Activated CD4-positive, alpha-beta T cell treated with anti-CD3 and anti-CD28 coated beads, Interleukin-2, amount 10 ng/mL, durations not matched to agents 24 days and 14 days (primary cell): ENCODE measurements at regions of chr2 and their contacts with region 1.

Region 1: DNA sequence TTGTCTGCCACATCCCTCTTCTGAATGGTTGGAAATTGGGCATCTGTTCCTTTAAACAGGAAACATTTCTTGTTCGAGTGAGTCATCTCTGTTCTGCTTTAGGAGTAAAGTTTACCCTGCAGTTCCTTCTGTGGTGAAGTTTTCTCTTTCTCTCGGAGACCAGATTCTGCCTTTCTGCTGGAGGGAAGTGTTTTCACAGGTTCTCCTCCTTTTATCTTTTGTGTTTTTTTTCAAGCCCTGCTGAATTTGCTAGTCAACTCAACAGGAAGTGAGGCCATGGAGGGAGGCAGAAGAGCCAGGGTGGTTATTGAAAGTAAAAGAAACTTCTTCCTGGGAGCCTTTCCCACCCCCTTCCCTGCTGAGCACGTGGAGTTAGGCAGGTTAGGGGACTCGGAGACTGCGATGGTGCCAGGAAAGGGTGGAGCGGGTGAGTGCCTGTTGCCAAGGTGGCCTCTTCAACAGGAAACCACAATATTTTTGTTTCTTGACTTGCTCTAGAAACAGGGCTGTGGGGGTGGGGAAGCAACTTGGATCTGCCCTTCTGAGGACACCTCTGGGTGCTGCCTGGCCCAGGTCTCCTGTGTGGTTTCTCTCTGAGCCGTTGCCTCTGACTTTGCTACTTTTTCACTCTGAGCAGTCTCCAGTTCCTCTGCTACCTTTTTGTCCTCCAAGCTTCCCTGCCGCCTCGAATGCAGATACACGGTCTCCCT is 2.2 kb upstream of the CASP8 start:
- DNase-seq: peak; percentile 98
- H3K4me3 Mint-ChIP-seq: peak overlapping the region; percentile 100
- H3K27ac Mint-ChIP-seq: peak overlapping the region; percentile 98
- H3K4me1 Mint-ChIP-seq: peaks cover 71% of the 10 kb centered on the region
- H3K27me3 Mint-ChIP-seq: no peaks in the 10 kb centered on the region

Region 2: DNA sequence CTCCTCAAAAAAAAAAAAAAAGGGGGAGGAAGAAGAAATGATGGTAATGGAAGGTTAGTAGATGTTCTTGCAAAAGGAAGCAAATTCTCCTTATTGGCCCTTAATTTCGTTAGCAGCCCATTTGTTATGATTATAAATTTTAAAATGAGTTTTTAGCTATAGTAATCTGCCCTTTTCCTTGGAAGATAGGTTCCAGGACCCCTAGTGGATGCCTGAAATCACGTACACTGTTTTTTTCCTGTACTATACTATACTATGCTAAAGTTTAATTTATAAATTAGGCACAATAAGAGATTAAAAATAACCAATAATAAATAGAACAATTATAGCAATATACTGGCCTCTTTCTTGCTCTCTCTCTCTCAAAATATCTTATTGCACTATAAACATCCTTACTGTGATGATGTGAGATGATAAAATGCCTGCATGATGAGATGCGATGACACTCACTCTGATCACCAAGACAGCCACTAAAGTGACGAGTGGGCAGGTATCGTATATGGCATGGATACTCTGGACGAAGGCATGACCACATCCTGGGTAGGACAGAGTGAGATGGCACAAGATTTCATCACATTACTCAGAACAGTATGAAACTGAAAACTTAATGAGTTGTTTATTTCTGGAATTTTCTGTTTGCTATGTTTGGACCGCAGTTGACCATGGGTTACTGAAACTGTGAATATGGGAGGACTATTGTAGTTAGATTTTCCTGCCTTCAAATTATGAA is 835.4 kb before region 1 on chr2:
- intact Hi-C with region 1: no loop called
- DNase-seq: no peak
- H3K4me3 Mint-ChIP-seq: no peak overlapping the region
- H3K27ac Mint-ChIP-seq: no peak overlapping the region
- H3K4me1 Mint-ChIP-seq: peaks cover 9% of the 10 kb centered on the region
- H3K27me3 Mint-ChIP-seq: no peaks in the 10 kb centered on the region

Region 3: DNA sequence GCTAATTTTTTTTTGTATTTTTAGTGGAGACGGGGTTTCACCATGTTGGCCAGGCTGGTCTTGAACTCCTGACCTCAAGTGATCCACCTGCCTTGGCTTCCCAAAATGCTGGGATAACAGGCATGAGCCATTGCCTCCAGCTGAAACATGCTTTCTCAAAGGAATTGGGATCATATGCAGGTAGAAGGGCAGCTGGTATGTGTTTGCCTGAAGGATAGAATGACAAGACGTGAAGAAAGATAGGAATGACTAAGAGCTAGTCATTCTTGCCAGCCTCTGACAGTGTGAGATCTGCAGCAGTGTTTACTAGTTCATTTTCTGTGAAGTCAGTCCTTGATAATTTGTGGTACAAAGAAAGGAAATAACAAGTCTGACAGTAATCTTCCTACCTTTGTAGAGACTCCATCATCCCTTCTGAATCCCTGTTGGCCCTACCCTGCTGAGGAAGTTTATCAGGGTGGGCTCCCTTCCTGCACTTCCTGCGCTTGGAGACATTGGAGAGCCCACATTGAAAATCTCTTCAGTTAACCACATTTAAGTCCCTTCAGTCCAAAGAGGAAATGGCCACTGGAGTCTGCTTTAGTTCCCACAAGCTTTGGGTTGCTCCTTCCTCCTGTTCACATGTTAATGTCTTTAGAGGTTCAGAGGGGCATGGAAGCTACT is 127.5 kb before region 1 on chr2:
- intact Hi-C with region 1: loop called (anchors 1 kb)
- DNase-seq: peak; percentile 80
- H3K4me3 Mint-ChIP-seq: peak overlapping the region; percentile 81
- H3K27ac Mint-ChIP-seq: peak overlapping the region; percentile 100
- H3K4me1 Mint-ChIP-seq: peaks cover 51% of the 10 kb centered on the region
- H3K27me3 Mint-ChIP-seq: no peaks in the 10 kb centered on the region

Region 4: GRCh38 chr2:201363857-201364560 is 105.9 kb after region 1 on chr2:
- intact Hi-C with region 1: loop called (anchors 2 kb)
- DNase-seq: peak; percentile 82
- H3K4me3 Mint-ChIP-seq: no peak overlapping the region
- H3K27ac Mint-ChIP-seq: peak overlapping the region; percentile 38
- H3K4me1 Mint-ChIP-seq: peaks cover 35% of the 10 kb centered on the region
- H3K27me3 Mint-ChIP-seq: no peaks in the 10 kb centered on the region

Region 5: DNA sequence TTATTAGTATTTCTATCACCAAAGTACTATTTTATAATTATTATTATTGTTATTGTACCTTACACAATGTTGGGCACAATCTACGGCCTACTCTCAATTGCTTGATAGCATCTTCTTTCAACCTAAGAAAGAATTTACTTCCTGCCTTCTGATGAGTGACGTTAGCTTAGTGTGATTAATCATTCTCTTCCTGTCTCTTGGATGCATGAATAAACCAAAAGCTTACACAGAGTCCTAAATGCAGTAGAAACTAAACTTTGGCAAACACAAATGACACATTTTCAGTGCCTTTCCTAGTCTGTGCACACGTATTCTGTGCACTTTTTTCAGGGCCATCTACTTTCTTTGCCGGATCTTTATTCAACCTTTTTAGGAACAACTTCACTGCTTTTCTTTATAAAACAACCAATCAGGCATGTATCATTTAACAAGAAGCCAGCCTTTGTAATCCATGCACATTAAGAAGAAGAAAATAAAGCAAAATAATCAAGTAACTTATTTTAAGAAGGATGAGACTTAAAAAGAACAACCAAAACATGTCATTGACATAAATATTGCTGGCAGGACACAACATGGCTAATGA is 174.0 kb after region 1 on chr2:
- intact Hi-C with region 1: loop called (anchors 5 kb)
- DNase-seq: peak; percentile 62
- H3K4me3 Mint-ChIP-seq: peak overlapping the region; percentile 77
- H3K27ac Mint-ChIP-seq: peak overlapping the region; percentile 95
- H3K4me1 Mint-ChIP-seq: peaks cover 28% of the 10 kb centered on the region
- H3K27me3 Mint-ChIP-seq: no peaks in the 10 kb centered on the region

Region 6: GRCh38 chr2:201642579-201643215 is 384.6 kb after region 1 on chr2:
- intact Hi-C with region 1: loop called (anchors 5 kb)
- DNase-seq: peak; percentile 97
- H3K4me3 Mint-ChIP-seq: peak overlapping the region; percentile 84
- H3K27ac Mint-ChIP-seq: peak overlapping the region; percentile 87
- H3K4me1 Mint-ChIP-seq: peaks cover 14% of the 10 kb centered on the region
- H3K27me3 Mint-ChIP-seq: peaks cover 3% of the 10 kb centered on the region

Region 7: GRCh38 chr2:202033321-202034248 is 775.5 kb after region 1 on chr2 and contains the start of gene FZD7:
- intact Hi-C with region 1: loop called (anchors 5 kb)
- DNase-seq: peak; percentile 96
- H3K4me3 Mint-ChIP-seq: peak within 1 kb of the TSS; percentile 85
- H3K27ac Mint-ChIP-seq: peak within 1 kb of the TSS; percentile 62
- H3K4me1 Mint-ChIP-seq: peaks cover 12% of the 10 kb centered on the region
- H3K27me3 Mint-ChIP-seq: peaks cover 42% of the 10 kb centered on the region
- total RNA-seq, gene FZD7: 1.3 TPM in 2 replicates

Region 8: GRCh38 chr2:202634556-202635427 is 1376.7 kb after region 1 on chr2 and contains the start of gene FAM117B:
- intact Hi-C with region 1: loop called (anchors 10 kb)
- DNase-seq: peak; percentile 99
- H3K4me3 Mint-ChIP-seq: peak within 1 kb of the TSS; percentile 98
- H3K27ac Mint-ChIP-seq: peak within 1 kb of the TSS; percentile 97
- H3K4me1 Mint-ChIP-seq: peaks cover 35% of the 10 kb centered on the region
- H3K27me3 Mint-ChIP-seq: no peaks in the 10 kb centered on the region
- total RNA-seq, gene FAM117B: 14.5 TPM in 2 replicates